Body of pancreas (tissue), 4 donors: ENCODE measurements at regions of chr6 and their contacts with region 1.

Region 1: DNA sequence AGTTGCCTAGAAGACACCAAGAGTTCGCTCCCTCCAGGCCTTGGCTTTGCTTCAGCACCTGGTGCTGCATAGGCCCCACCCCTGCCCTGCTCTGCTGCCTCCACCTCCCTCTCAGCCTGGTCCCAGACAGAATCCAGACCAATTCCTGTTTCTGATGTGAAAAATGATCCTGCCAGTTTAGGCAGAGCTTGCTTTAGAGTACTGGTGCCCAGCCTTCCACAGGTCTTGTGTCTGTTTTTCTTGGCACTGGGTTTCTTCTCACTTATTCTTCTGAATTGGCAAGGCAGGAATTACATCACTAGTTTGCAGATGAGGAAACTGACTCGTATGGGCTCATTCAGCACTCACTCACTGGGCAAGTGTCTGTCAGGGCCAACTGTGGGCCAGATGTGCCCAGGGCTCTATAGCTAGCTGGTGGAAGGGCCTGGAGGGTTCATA is 53.0 kb downstream of the HLA-A start:
- DNase-seq: no peak
- ATAC-seq: no peak
- H3K4me3 ChIP-seq: no peak overlapping the region
- H3K27ac ChIP-seq: no peak overlapping the region
- H3K4me1 ChIP-seq: no peaks in the 10 kb centered on the region
- H3K27me3 ChIP-seq: peaks cover 0 to 3% of the 10 kb centered on the region in 2 donors
- CTCF ChIP-seq: no peak
- POLR2A ChIP-seq: no peak

Region 2: GRCh38 chr6:29763491-29764289 is 231.7 kb before region 1 on chr6:
- intact Hi-C with region 1: loop called (anchors 10 kb)
- DNase-seq: no peak
- ATAC-seq: no peak
- H3K4me3 ChIP-seq: no peak overlapping the region
- H3K27ac ChIP-seq: no peak overlapping the region
- H3K4me1 ChIP-seq: no peaks in the 10 kb centered on the region
- H3K27me3 ChIP-seq: no peaks in the 10 kb centered on the region
- CTCF ChIP-seq: no peak
- POLR2A ChIP-seq: no peak